ENCODE measurements at regions of chr10 and their contacts with region 1.

Region 1: GRCh38 chr10:125719146-125720001 is at the start of gene EDRF1:
- DNase-seq: peak; percentile 99
- H3K4me3 ChIP-seq: peak within 1 kb of the TSS; percentile 68 to 97 (median 84)
- H3K27ac ChIP-seq: peak within 1 kb of the TSS; percentile 86 to 94 (median 89)
- H3K4me1 ChIP-seq: peaks cover 0 to 21% (median 17%) of the 10 kb centered on the region in 4 donors
- H3K27me3 ChIP-seq: no peaks in the 10 kb centered on the region
- CTCF ChIP-seq: no peak
- EP300 ChIP-seq: no peak
- POLR2A ChIP-seq: peak; percentile 56 to 81
- total RNA-seq, gene EDRF1: 16.1 to 20.8 (median 18.4) TPM

Region 2: GRCh38 chr10:124802313-124802675 is 917.1 kb before region 1 on chr10:
- intact Hi-C with region 1: loop called (anchors 5 kb)
- DNase-seq: no peak
- H3K4me3 ChIP-seq: peak overlapping the region; percentile 77 to 97 (median 95)
- H3K27ac ChIP-seq: peak overlapping the region; percentile 77 to 86 (median 83)
- H3K4me1 ChIP-seq: peaks cover 0 to 17% (median 11%) of the 10 kb centered on the region in 4 donors
- H3K27me3 ChIP-seq: no peaks in the 10 kb centered on the region
- CTCF ChIP-seq: no peak
- EP300 ChIP-seq: no peak
- POLR2A ChIP-seq: no peak

Region 3: GRCh38 chr10:125048101-125048864 is 671.1 kb before region 1 on chr10:
- intact Hi-C with region 1: loop called (anchors 10 kb)
- DNase-seq: peak; percentile 94
- H3K4me3 ChIP-seq: no peak overlapping the region
- H3K27ac ChIP-seq: peak overlapping the region; percentile 50 to 65 (median 56)
- H3K4me1 ChIP-seq: peaks cover 0 to 58% (median 46%) of the 10 kb centered on the region in 4 donors
- H3K27me3 ChIP-seq: no peaks in the 10 kb centered on the region
- CTCF ChIP-seq: peak; percentile 86 to 98 (median 94)
- EP300 ChIP-seq: no peak
- POLR2A ChIP-seq: no peak

Region 4: DNA sequence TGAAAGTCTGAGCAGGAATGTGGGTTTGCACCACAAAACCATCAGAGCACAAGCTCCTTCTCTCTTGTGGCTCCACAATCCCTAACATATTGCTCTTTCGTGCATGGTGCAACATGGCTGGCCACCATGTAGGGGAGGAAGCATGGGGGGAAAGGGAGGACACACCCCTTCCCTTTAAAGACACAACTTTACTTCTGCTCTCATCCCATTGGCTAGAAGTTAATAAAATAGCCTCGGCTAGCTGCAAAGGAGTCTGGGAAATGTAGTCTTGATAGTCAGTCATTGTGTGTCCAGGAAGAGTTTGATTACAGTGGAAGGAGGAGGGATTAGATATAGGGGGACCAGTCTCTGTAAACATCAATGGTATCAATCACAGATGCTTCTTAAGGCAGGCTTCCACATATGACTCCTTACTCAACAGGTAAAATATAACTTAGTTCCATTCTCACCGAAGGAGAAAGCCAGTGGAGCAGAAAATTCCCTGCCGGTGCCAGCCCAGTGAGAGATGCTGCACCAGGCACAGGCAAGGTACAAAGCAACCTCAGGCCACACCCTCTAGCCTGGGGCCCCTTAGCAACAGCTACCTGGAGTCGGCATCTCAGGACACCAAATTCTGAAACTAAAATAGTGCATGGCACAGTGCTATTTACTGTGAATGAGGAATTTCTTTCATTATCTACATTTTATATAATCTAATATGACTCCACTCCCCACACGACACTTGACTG is 434.3 kb before region 1 on chr10:
- intact Hi-C with region 1: no loop called
- DNase-seq: no peak
- H3K4me3 ChIP-seq: no peak overlapping the region
- H3K27ac ChIP-seq: no peak overlapping the region
- H3K4me1 ChIP-seq: no peaks in the 10 kb centered on the region
- H3K27me3 ChIP-seq: peaks cover 0 to 6% (median 0%) of the 10 kb centered on the region in 3 donors
- CTCF ChIP-seq: no peak
- EP300 ChIP-seq: no peak
- POLR2A ChIP-seq: no peak

Region 5: GRCh38 chr10:125448607-125449006 is 270.8 kb before region 1 on chr10:
- intact Hi-C with region 1: no loop called
- DNase-seq: no peak
- H3K4me3 ChIP-seq: no peak overlapping the region
- H3K27ac ChIP-seq: no peak overlapping the region
- H3K4me1 ChIP-seq: peaks cover 0 to 4% (median under 1%) of the 10 kb centered on the region in 4 donors
- H3K27me3 ChIP-seq: no peaks in the 10 kb centered on the region
- CTCF ChIP-seq: no peak
- EP300 ChIP-seq: no peak
- POLR2A ChIP-seq: no peak

Region 6: DNA sequence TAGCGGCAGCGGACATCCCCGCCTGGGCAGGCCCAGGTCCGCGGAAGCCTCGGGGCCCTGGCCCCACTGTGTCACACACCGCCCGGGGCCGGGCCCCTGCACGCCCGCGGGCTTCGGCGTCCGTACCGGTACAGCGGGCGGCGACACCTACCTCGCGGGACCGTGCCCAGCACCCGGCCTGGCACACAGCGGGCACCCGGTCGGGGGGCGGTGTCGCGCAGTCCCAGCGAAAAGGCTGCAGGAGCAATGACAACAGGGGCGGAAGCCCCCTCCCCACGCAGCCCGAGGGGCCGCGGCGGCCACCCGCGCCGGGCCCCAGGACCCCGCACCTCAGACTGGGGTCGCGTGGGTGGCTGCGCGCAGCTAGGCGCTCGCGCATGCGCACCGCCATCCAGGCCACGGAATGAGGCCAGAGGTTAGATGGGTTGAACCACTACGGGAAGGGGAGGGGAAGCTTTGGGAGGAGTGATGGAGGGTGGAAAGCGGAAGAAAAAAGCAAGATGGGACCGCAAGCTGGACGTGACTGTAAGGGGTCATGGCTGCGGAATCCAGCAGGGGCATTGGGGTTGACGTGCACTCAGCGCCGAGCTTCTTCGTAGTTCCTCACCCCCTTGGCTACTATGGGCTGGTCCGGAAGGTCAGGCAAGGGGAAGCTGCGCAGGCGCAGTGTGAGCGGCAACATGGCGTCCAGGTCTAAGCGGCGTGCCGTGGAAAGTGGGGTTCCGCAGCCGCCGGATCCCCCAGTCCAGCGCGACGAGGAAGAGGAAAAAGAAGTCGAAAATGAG is 103.7 kb after region 1 on chr10 and contains the starts of genes BCCIP and UROS:
- intact Hi-C with region 1: loop called (anchors 5 kb)
- DNase-seq: peak; percentile 95
- H3K4me3 ChIP-seq: peak within 1 kb of the TSS; percentile 91 to 97 (median 93)
- H3K27ac ChIP-seq: peak within 1 kb of the TSS; percentile 80 to 91 (median 88)
- H3K4me1 ChIP-seq: peaks cover 0 to 37% (median 31%) of the 10 kb centered on the region in 4 donors
- H3K27me3 ChIP-seq: no peaks in the 10 kb centered on the region
- CTCF ChIP-seq: no peak
- EP300 ChIP-seq: no peak
- POLR2A ChIP-seq: peak; percentile 15 to 25
- total RNA-seq, gene BCCIP: 37.7 to 54.9 (median 45.8) TPM
- total RNA-seq, gene UROS: 26.3 to 46.7 (median 36.8) TPM